ENCODE measurements at regions of chr1 and their contacts with region 1.

Region 1: GRCh38 chr1:30911046-30911954 is 2.7 kb upstream of the SDC3 start:
- H3K4me3 Mint-ChIP-seq: no peak overlapping the region
- H3K27ac Mint-ChIP-seq: peak overlapping the region; percentile 97
- H3K4me1 Mint-ChIP-seq: peaks cover 83% of the 10 kb centered on the region
- H3K27me3 Mint-ChIP-seq: peaks cover 23% of the 10 kb centered on the region

Region 2: DNA sequence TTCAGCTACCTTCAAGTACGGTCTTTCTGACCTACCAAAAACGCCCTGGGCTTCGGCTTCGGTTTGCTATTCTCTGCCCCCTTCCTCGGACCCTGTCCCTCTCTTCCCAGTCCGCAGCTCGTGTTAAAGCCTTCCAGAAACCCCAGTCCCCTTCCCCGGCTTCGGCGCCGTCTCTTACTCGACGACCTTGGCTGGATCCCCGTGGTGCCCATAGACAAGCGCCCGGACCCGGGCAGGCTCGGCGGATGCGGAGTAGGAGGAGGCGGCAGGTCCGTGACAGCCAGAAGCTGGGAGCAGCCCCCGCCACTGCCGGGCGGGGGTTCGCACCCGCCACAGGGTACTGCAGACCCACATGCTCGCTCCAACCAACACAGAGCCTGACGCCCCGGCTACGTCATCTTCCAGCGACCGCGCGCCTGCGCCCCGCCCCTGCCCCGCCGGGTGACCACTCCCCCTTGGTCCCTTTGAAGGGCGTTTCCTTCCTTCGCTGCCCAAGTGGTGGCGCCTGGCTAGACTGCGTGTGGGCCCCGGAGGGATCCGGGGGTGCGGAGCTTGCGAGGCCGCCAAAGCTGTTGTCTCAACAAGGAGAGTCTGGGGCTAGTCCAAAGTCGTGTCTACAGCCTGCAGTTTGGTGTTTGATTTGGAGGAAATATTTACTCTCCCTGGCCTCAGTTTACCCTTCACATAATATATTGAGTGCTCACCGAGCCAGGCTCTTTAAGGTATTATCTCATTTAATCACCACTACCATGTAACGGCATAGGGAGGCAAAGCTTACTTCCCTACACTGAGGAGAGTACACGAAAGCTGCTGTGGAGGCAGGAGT is 1680.5 kb before region 1 on chr1 and contains the start of gene MECR:
- intact Hi-C with region 1: loop called (anchors 10 kb)
- H3K4me3 Mint-ChIP-seq: peak within 1 kb of the TSS; percentile 88
- H3K27ac Mint-ChIP-seq: peak within 1 kb of the TSS; percentile 89
- H3K4me1 Mint-ChIP-seq: peaks cover 11% of the 10 kb centered on the region
- H3K27me3 Mint-ChIP-seq: peaks cover 18% of the 10 kb centered on the region

Region 3: GRCh38 chr1:30779294-30780071 is 131.8 kb before region 1 on chr1:
- intact Hi-C with region 1: loop called (anchors 1 kb)
- H3K4me3 Mint-ChIP-seq: no peak overlapping the region
- H3K27ac Mint-ChIP-seq: peak overlapping the region; percentile 91
- H3K4me1 Mint-ChIP-seq: peaks cover 51% of the 10 kb centered on the region
- H3K27me3 Mint-ChIP-seq: peaks cover 12% of the 10 kb centered on the region

Region 4: DNA sequence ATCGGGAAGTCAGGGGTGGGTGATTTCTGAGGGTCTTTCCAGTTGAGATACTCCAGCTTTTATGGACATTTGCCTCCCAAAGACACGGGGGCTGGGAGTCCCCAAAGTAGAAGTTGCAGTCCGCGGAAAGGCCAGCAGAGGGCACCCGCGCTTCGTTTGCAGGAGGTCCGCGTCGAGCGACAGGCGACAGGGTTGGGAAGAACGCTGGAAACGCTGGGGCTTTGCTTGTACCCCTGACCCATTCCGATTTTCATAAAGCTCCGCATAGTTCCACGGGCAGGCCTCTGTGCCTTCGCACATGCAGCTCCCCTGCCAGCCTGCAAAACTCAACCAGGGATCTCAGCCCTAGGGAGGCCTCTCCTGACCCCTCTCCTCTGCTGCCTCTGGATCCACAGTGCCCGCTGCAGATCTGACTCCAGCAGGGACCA is 109.5 kb before region 1 on chr1:
- intact Hi-C with region 1: loop called (anchors 1 kb)
- H3K4me3 Mint-ChIP-seq: no peak overlapping the region
- H3K27ac Mint-ChIP-seq: peak overlapping the region; percentile 4
- H3K4me1 Mint-ChIP-seq: peaks cover 65% of the 10 kb centered on the region
- H3K27me3 Mint-ChIP-seq: peaks cover 65% of the 10 kb centered on the region

Region 5: DNA sequence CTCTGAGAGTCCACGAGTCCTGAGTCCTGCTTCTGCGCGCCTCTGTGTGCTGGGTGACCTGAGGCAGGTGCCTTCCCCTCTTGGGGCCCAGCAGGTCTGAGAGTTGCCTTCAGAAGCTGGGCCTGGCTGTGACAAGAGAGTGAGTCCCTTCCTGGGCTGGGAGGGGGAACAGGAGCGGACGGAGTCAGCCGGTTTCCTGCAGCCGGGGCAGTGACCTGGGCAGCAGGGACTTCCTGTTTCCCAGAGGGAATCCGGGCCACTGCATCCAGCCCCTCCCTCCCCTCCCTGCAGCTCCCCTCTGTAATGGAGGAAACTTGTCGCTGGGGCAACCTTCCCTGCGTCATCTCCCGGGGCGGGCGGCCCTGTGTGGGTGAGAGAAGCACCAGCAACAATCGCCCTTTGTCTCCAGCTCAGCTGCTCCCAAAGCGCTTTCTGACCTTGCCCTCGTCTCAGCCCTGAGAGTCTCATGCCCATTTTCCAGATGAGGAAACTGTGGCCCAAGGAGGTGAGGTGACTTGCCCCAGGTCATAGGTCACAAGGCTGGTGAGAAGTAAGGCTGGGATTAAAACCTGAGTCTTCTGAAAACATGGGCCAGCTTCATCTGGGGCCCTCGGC is 63.8 kb before region 1 on chr1:
- intact Hi-C with region 1: loop called (anchors 10 kb)
- H3K4me3 Mint-ChIP-seq: no peak overlapping the region
- H3K27ac Mint-ChIP-seq: peak overlapping the region; percentile 34
- H3K4me1 Mint-ChIP-seq: peaks cover 29% of the 10 kb centered on the region
- H3K27me3 Mint-ChIP-seq: peaks cover 91% of the 10 kb centered on the region

Region 6: DNA sequence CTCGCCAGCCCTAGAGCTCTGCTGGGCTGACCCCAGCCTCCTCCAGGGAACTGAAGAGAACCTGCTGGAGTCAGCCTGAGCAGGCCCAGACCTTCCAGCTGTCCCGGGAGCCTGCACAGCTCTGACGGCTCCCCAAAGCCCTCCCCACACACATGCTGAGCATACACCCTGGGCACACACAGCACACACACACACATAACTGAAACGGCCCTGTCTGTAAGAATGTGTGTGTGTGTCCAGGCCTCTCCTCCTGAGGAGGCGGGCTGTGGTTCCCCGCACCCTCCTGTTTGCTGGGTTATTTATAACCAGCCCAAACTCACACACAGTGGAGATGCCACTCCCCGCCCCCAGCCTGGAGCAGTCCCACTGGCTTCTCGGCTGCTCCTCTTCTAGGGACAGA is 22.9 kb before region 1 on chr1:
- intact Hi-C with region 1: no loop called
- H3K4me3 Mint-ChIP-seq: no peak overlapping the region
- H3K27ac Mint-ChIP-seq: no peak overlapping the region
- H3K4me1 Mint-ChIP-seq: peaks cover 34% of the 10 kb centered on the region
- H3K27me3 Mint-ChIP-seq: peaks cover 75% of the 10 kb centered on the region

Region 7: GRCh38 chr1:30966690-30967369 is 55.5 kb after region 1 on chr1:
- intact Hi-C with region 1: no loop called
- H3K4me3 Mint-ChIP-seq: no peak overlapping the region
- H3K27ac Mint-ChIP-seq: no peak overlapping the region
- H3K4me1 Mint-ChIP-seq: no peaks in the 10 kb centered on the region
- H3K27me3 Mint-ChIP-seq: no peaks in the 10 kb centered on the region

Region 8: DNA sequence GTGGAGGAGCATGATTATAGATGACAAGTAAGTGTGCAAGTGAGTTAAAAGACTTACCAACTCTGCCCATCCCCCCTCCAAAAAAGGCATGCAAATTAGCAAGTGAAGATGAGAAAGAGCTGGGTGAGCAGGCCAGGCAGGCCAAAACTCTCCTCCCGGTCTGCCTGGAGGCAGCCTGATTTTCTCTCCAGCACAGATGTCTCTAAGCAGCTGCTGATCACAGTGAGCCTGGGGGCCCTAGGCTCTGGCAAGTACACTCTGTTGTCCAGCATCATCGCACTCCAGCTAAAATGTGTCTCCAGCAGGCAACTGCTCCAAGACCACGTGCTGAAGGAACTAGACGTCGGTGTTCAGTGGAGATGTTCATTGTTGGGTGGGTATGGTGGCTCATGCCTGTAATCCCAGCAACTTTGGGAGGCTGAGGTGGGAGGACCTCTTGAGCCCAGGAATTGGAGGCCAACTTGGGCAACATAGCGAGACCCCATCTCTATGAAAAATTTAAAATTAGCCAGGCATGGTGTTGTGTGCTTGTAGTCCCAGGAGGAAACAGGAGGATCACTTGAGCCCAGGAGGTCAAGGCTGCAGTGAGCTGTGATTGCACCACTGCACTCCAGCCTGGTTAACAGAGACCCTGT is 210.9 kb after region 1 on chr1:
- intact Hi-C with region 1: no loop called
- H3K4me3 Mint-ChIP-seq: no peak overlapping the region
- H3K27ac Mint-ChIP-seq: no peak overlapping the region
- H3K4me1 Mint-ChIP-seq: no peaks in the 10 kb centered on the region
- H3K27me3 Mint-ChIP-seq: no peaks in the 10 kb centered on the region